CD4-positive, alpha-beta memory T cell (primary cell): ENCODE measurements at regions of chr2 and their contacts with region 1.

Region 1: DNA sequence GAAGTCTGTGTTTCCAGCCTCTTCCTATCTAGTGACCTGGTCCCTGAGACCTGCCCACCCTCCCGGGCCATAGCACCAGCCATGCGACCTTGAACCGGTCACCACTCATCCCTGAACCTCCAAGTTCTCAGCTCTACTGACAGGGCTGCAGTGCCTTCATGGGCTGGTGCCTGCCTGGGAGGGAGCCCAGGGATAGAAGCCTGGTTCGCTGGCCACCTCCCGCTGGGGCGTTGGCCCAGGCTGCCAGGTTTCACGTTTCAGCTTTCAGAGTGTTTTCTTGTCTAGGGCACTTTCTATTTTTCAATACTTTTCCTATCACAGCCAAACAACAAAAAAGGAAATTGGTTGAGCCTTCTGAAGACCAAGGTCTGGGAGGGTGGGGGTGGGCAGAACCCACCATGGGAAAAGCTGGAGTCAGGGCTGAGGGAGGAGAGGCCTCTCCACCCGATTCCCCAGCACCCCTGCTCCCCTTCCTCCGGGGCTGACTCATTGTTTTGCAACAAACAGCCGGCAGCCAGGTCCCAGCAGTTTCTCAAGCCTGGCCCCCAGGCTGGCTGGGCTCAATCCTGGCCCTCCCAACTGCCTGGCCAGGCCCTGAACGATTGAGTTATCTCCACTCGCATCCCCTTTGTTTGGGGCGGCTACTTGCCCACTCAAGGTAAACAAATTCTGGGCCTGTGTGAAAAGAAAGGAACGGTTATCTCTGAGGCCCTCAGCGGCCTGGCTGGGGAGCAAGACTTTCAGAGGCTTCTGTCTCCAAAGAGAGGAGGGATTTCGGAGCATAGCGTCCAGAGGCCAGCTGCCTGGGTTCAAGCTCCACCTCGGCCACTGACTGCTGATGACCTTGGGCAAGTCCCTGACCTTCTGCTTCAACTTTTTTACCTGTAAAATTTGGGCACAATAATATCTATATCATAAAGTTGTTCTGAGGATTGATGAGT is 47.5 kb downstream of the ZFP36L2 start:
- DNase-seq: peak in 1 of 5 donors; percentile 61
- H3K4me3 ChIP-seq: peak overlapping the region in 1 of 2 donors; percentile 7
- H3K4me3 Mint-ChIP-seq: peak overlapping the region in 7 of 8 donors; percentile 54 to 82 (median 72)
- H3K27ac ChIP-seq: peak overlapping the region; percentile 53
- H3K27ac Mint-ChIP-seq: peak overlapping the region; percentile 93 to 99 (median 98)
- H3K4me1 ChIP-seq: peaks cover 84% of the 10 kb centered on the region
- H3K4me1 Mint-ChIP-seq: peaks cover 58 to 80% (median 70%) of the 10 kb centered on the region in 4 donors
- H3K27me3 ChIP-seq: no peaks in the 10 kb centered on the region
- H3K27me3 Mint-ChIP-seq: no peaks in the 10 kb centered on the region

Region 2: DNA sequence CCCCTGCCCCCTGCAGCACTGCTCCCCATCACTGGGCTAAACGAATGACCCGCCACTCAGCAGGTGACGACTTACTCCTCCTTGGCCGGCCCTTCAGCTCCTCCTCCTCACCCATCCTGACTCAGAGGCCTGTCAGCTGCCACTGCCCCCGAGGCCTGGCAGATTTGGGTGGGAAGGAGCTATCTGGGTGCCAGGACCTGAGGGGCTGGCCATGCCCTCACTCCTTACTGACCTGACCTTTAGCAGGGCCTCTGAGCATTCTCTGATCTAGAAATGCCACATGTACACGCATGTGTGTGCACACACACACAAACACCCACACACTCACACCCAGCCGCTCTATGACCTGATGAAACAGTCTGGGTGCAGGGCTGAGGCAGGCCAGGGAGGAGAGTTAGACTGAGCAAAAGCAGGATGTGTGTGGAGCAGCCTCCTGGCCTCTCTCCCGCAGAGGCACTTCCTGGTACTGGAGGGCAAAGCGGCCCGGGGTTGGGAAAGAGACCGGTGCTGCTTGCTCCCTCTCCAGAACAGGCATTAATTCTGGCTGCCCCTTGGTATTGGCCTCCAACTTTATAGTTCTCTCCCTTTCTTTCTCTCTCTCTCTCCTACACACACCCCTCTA is 20.5 kb before region 1 on chr2:
- CTCF ChIA-PET with region 1: interaction called, 4 read pairs
- POLR2A ChIA-PET with region 1: interaction called, 69 read pairs
- intact Hi-C with region 1: loop called (anchors 1 kb)
- DNase-seq: peak in 1 of 5 donors; percentile 55
- H3K4me3 ChIP-seq: peak overlapping the region; percentile 30 to 40
- H3K4me3 Mint-ChIP-seq: peak overlapping the region; percentile 75 to 87 (median 80)
- H3K27ac ChIP-seq: peak overlapping the region; percentile 84
- H3K27ac Mint-ChIP-seq: peak overlapping the region; percentile 97 to 99 (median 99)
- H3K4me1 ChIP-seq: peaks cover 76% of the 10 kb centered on the region
- H3K4me1 Mint-ChIP-seq: peaks cover 41 to 94% (median 66%) of the 10 kb centered on the region in 4 donors
- H3K27me3 ChIP-seq: no peaks in the 10 kb centered on the region
- H3K27me3 Mint-ChIP-seq: no peaks in the 10 kb centered on the region

Region 3: GRCh38 chr2:43305517-43305916 is 126.6 kb after region 1 on chr2:
- CTCF ChIA-PET with region 1: no interaction called
- POLR2A ChIA-PET with region 1: no interaction called
- intact Hi-C with region 1: no loop called
- DNase-seq: no peak
- H3K4me3 ChIP-seq: no peak overlapping the region
- H3K4me3 Mint-ChIP-seq: no peak overlapping the region
- H3K27ac ChIP-seq: no peak overlapping the region
- H3K27ac Mint-ChIP-seq: no peak overlapping the region
- H3K4me1 ChIP-seq: no peaks in the 10 kb centered on the region
- H3K4me1 Mint-ChIP-seq: peaks cover 0 to 7% (median 3%) of the 10 kb centered on the region in 4 donors
- H3K27me3 ChIP-seq: no peaks in the 10 kb centered on the region
- H3K27me3 Mint-ChIP-seq: no peaks in the 10 kb centered on the region

Region 4: GRCh38 chr2:43408407-43409160 is 229.7 kb after region 1 on chr2:
- CTCF ChIA-PET with region 1: no interaction called
- POLR2A ChIA-PET with region 1: no interaction called
- intact Hi-C with region 1: no loop called
- DNase-seq: no peak
- H3K4me3 ChIP-seq: no peak overlapping the region
- H3K4me3 Mint-ChIP-seq: no peak overlapping the region
- H3K27ac ChIP-seq: no peak overlapping the region
- H3K27ac Mint-ChIP-seq: no peak overlapping the region
- H3K4me1 ChIP-seq: no peaks in the 10 kb centered on the region
- H3K4me1 Mint-ChIP-seq: peaks cover 0 to 4% (median 0%) of the 10 kb centered on the region in 4 donors
- H3K27me3 ChIP-seq: no peaks in the 10 kb centered on the region
- H3K27me3 Mint-ChIP-seq: no peaks in the 10 kb centered on the region